Colonic mucosa (tissue), 4 donors: ENCODE measurements at regions of chr7 and their contacts with region 1.

Region 1: DNA sequence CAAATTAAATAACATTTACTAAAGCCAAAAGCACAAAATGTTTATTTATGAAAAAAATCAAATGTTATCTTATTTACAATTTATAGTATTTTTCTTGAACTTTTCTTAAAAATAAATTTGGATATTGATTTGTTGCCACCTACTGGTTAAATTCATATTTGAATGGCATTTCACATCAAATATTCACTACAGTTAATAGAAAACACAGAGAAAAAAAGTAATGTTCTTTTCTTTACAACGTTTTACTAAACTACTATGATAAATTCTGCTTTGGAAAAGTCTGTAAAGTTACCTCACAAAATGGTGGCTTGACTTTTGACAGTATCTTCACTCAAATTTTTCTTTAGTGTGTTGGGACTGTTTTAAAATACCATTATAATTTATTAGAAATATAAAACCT is 52.7 kb downstream of the SRPK2 start:
- DNase-seq: no peak
- H3K4me3 ChIP-seq: no peak overlapping the region
- H3K27ac ChIP-seq: no peak overlapping the region
- H3K4me1 ChIP-seq: no peaks in the 10 kb centered on the region
- H3K27me3 ChIP-seq: no peaks in the 10 kb centered on the region
- CTCF ChIP-seq: peak; percentile 33

Region 2: GRCh38 chr7:104914421-104914820 is 421.6 kb before region 1 on chr7:
- intact Hi-C with region 1: loop called (anchors 10 kb)
- DNase-seq: no peak
- H3K4me3 ChIP-seq: no peak overlapping the region
- H3K27ac ChIP-seq: no peak overlapping the region
- H3K4me1 ChIP-seq: no peaks in the 10 kb centered on the region
- H3K27me3 ChIP-seq: no peaks in the 10 kb centered on the region
- CTCF ChIP-seq: no peak

Region 3: DNA sequence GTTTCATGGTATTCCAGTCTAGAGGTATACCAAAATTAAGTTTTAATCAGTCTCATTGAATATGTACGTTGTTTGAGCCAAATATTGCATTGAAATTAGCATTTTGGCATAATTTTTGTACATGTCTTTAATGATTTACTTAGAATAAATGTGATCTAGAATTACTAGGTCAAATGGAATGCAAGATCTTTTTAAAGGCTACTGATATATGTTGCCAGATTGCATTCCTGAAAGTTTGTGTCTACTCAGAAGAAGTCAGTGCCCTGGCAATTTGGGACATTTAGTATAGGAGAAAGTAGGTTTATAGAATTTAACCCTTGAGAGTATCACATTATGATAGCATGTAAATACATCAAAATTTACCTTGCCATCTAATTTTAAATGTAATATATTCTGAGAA is 289.6 kb before region 1 on chr7:
- intact Hi-C with region 1: no loop called
- DNase-seq: no peak
- H3K4me3 ChIP-seq: no peak overlapping the region
- H3K27ac ChIP-seq: no peak overlapping the region
- H3K4me1 ChIP-seq: no peaks in the 10 kb centered on the region
- H3K27me3 ChIP-seq: no peaks in the 10 kb centered on the region
- CTCF ChIP-seq: no peak

Region 4: GRCh38 chr7:105156731-105157130 is 179.3 kb before region 1 on chr7:
- intact Hi-C with region 1: loop called (anchors 5 kb)
- DNase-seq: no peak
- H3K4me3 ChIP-seq: no peak overlapping the region
- H3K27ac ChIP-seq: no peak overlapping the region
- H3K4me1 ChIP-seq: no peaks in the 10 kb centered on the region
- H3K27me3 ChIP-seq: no peaks in the 10 kb centered on the region
- CTCF ChIP-seq: no peak

Region 5: DNA sequence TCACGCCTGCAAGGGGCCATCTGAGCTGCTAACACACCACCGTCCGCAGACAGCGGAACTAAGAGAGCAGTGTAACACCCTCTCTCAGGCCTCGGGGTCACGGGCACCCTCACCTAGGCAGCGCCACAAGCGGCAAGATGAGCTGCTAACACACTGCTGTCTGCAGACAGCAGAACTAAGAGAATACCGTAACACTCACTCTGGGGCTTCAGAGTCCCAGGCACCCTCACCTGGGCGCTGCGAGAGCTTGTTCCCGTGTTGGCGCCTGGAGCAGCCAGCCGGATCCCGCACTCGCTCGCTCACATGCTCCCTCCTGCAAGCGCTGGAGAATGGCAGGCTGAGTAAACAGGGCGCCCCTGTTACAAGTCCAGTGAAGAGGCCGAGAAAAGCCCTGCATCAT is 107.5 kb before region 1 on chr7:
- intact Hi-C with region 1: no loop called
- DNase-seq: no peak
- H3K4me3 ChIP-seq: no peak overlapping the region
- H3K27ac ChIP-seq: no peak overlapping the region
- H3K4me1 ChIP-seq: no peaks in the 10 kb centered on the region
- H3K27me3 ChIP-seq: no peaks in the 10 kb centered on the region
- CTCF ChIP-seq: no peak